ENCODE measurements at regions of chr6 and their contacts with region 1.

Region 1: DNA sequence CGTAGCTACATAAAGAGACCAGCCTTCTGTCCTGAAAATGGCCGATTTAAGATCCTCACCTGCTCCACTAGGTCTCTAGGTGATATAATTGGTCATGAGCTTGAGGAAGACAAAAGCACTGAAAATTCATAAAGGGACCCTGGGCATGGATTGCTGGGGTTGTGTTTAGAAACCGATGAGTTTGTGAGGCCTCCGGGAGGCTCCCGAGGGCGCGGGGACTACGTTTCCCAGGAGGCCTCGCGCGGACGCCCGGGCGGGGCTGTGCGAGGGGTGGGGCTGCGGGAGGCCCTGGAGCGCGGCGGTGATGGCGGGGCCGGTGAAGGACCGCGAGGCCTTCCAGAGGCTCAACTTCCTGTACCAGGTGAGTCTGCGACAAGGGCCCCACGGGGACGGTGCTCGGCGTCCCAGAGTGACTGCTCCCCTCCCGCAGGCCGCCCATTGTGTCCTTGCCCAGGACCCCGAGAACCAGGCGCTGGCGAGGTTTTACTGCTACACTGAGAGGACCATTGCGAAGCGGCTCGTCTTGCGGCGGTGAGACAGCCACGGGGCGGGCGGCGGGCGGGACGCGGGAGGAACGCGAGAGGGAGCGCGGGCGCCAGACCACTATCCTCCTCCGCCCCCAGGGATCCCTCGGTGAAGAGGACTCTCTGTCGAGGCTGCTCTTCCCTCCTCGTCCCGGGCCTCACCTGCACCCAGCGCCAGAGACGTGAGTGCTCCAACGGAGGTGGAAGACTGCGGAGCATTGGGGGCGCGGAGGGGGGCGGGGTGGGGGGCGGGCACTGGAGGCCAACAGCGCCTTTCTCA is at the start of gene RPP21:
- DNase-seq: peak; percentile 85 to 91
- H3K4me3 ChIP-seq: peak within 1 kb of the TSS; percentile 98
- H3K4me3 Mint-ChIP-seq: peak within 1 kb of the TSS; percentile 78
- H3K27ac Mint-ChIP-seq: peak within 1 kb of the TSS; percentile 65
- H3K4me1 ChIP-seq: no peaks in the 10 kb centered on the region
- H3K4me1 Mint-ChIP-seq: peaks cover 6% of the 10 kb centered on the region
- H3K27me3 ChIP-seq: no peaks in the 10 kb centered on the region
- H3K27me3 Mint-ChIP-seq: no peaks in the 10 kb centered on the region
- CTCF ChIP-seq: no peak
- total RNA-seq, gene RPP21: 44.2 and 47.5 TPM in 2 replicates

Region 2: GRCh38 chr6:30130887-30131862 is 213.9 kb before region 1 on chr6:
- CTCF ChIA-PET with region 1: no interaction called
- POLR2A ChIA-PET with region 1: no interaction called
- intact Hi-C with region 1: no loop called
- DNase-seq: peak; percentile 75 to 83
- H3K4me3 ChIP-seq: no peak overlapping the region
- H3K4me3 Mint-ChIP-seq: peak overlapping the region; percentile 54
- H3K27ac Mint-ChIP-seq: peak overlapping the region; percentile 44
- H3K4me1 ChIP-seq: peaks cover 21% of the 10 kb centered on the region
- H3K4me1 Mint-ChIP-seq: peaks cover 18% of the 10 kb centered on the region
- H3K27me3 ChIP-seq: no peaks in the 10 kb centered on the region
- H3K27me3 Mint-ChIP-seq: no peaks in the 10 kb centered on the region
- CTCF ChIP-seq: peak; percentile 97 to 99

Region 3: DNA sequence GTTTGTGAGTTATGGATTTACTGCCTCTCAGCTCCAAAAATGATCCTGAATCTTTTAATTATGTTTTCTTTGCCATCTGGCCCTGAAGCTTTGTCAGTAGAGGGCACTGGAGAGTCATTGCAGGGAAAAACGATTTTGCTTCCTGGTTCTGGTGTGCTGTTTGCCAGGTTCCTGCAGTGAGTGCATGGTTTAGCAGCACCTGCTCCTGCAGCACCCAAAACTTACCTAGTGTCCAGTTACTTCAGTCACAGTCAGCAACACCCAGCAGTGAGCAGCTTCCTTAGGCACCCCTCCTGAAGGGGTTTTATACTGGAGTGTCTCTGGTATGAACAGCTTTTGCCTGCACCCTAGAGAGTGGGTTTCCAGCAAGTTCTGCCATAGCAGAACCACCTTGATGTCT is 125.8 kb before region 1 on chr6:
- CTCF ChIA-PET with region 1: no interaction called
- POLR2A ChIA-PET with region 1: no interaction called
- intact Hi-C with region 1: loop called (anchors 1 kb)
- DNase-seq: peak in 1 of 2 experiments; percentile 57
- H3K4me3 ChIP-seq: no peak overlapping the region
- H3K4me3 Mint-ChIP-seq: no peak overlapping the region
- H3K27ac Mint-ChIP-seq: no peak overlapping the region
- H3K4me1 ChIP-seq: 0 out of 2 replicates have a peak, but pooled peaks cover 3% of the 10 kb centered on the region
- H3K4me1 Mint-ChIP-seq: no peaks in the 10 kb centered on the region
- H3K27me3 ChIP-seq: no peaks in the 10 kb centered on the region
- H3K27me3 Mint-ChIP-seq: no peaks in the 10 kb centered on the region
- CTCF ChIP-seq: peak; percentile 70 to 88

Region 4: DNA sequence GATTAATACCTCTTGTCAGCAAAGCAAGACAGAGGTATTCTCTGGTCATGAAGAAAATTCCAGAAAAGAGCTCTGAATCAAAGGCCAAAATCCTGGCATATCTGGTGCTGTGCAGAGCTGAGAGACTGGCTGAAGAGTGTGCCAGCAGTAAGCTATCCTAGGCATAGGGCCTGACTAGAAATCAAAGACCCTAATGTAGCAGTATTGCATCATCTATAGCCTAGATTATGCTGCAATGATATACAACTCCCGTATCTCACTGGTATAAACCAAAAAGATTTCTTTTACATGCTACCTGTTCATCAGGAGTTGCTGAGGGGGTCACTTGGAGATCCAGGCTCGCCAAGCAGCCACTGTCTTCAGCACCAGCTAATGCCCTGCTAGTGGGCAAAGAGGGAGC is 49.2 kb before region 1 on chr6:
- CTCF ChIA-PET with region 1: no interaction called
- POLR2A ChIA-PET with region 1: no interaction called
- intact Hi-C with region 1: no loop called
- DNase-seq: no peak
- H3K4me3 ChIP-seq: no peak overlapping the region
- H3K4me3 Mint-ChIP-seq: no peak overlapping the region
- H3K27ac Mint-ChIP-seq: no peak overlapping the region
- H3K4me1 ChIP-seq: no peaks in the 10 kb centered on the region
- H3K4me1 Mint-ChIP-seq: no peaks in the 10 kb centered on the region
- H3K27me3 ChIP-seq: no peaks in the 10 kb centered on the region
- H3K27me3 Mint-ChIP-seq: no peaks in the 10 kb centered on the region
- CTCF ChIP-seq: no peak

Region 5: GRCh38 chr6:30357678-30358540 is 12.8 kb after region 1 on chr6:
- CTCF ChIA-PET with region 1: no interaction called
- POLR2A ChIA-PET with region 1: no interaction called
- intact Hi-C with region 1: no loop called
- DNase-seq: peak; percentile 40 to 49
- H3K4me3 ChIP-seq: no peak overlapping the region
- H3K4me3 Mint-ChIP-seq: no peak overlapping the region
- H3K27ac Mint-ChIP-seq: no peak overlapping the region
- H3K4me1 ChIP-seq: no peaks in the 10 kb centered on the region
- H3K4me1 Mint-ChIP-seq: no peaks in the 10 kb centered on the region
- H3K27me3 ChIP-seq: no peaks in the 10 kb centered on the region; the same call in 1 of the 2 replicates
- H3K27me3 Mint-ChIP-seq: peaks cover 22% of the 10 kb centered on the region
- CTCF ChIP-seq: peak; percentile 65 to 69